Endothelial cell of umbilical vein (primary cell): ENCODE measurements at regions of chr11 and their contacts with region 1.

Region 1: DNA sequence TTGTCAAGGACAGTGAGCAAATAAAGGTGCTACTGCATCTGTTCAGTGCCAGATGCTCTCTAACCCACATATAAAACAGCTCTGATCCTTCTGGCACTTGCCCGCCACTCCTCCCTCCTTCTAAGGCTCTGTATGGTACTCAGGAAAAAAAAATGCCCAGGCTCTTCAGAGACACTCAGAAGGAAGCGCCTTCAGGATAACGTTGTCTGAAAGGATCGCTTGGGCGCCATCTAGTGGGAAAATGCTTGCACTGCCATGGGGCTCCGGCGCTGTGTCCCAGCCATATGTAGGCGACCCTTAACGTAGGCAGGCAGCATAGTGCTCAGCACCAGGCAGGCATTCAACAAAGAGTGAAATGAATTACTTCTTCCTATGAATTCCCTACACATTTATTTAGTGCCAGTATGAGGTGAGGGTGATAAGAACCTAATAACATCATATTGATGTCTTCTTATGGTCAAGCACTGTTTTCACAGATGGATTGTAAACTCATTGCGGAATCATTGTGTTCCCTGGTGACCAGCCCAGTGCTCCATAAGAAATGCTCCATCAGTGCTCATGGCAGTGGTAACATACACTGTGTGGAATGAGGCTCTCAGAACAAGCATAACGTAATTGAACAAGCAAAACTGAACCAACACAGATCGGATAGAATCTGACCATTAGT is 39.6 kb downstream of the PAMR1 start:
- DNase-seq: peak; percentile 79
- H3K4me3 ChIP-seq: no peak overlapping the region
- H3K27ac ChIP-seq: no peak overlapping the region
- H3K4me1 ChIP-seq: no peaks in the 10 kb centered on the region
- H3K27me3 ChIP-seq: peaks cover 8 to 10% of the 10 kb centered on the region in 2 experiments
- CTCF ChIP-seq: peak; percentile 85 to 92
- POLR2A ChIP-seq: no peak

Region 2: GRCh38 chr11:35214792-35215193 is 271.0 kb before region 1 on chr11:
- CTCF ChIA-PET with region 1: no interaction called
- POLR2A ChIA-PET with region 1: no interaction called
- dilution Hi-C with region 1: no loop called
- intact Hi-C with region 1: no loop called
- DNase-seq: peak; percentile 54
- H3K4me3 ChIP-seq: no peak overlapping the region
- H3K27ac ChIP-seq: peak overlapping the region; percentile 24
- H3K4me1 ChIP-seq: peaks cover 9% of the 10 kb centered on the region
- H3K27me3 ChIP-seq: no peaks in the 10 kb centered on the region
- CTCF ChIP-seq: no peak
- POLR2A ChIP-seq: no peak

Region 3: DNA sequence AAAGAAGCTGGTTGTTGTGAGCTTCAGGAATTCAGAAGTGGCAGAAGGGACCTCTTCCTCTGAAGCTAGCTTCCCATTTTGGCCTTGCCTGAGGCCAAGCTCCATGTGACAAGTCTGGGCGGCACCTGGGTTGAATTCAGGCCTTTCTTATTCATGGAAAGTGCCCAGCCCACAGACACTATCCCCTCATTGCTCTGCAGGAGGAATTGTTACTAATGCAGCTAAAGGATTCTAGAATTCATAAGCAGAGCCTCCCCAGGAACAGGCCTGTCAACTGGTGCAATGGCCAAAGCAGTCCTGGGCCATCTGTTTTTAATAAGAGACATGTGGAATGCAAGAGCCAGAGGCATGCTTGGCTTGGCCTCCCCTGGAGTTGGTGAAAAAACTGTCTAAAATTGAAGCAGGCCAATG is 137.9 kb before region 1 on chr11:
- CTCF ChIA-PET with region 1: no interaction called
- POLR2A ChIA-PET with region 1: no interaction called
- dilution Hi-C with region 1: no loop called
- intact Hi-C with region 1: no loop called
- DNase-seq: no peak
- H3K4me3 ChIP-seq: no peak overlapping the region
- H3K27ac ChIP-seq: no peak overlapping the region
- H3K4me1 ChIP-seq: no peaks in the 10 kb centered on the region
- H3K27me3 ChIP-seq: peaks cover 0 to 4% of the 10 kb centered on the region in 2 experiments
- CTCF ChIP-seq: no peak
- POLR2A ChIP-seq: no peak

Region 4: GRCh38 chr11:35474688-35475087 is 11.1 kb before region 1 on chr11:
- CTCF ChIA-PET with region 1: interaction called, 12 read pairs
- POLR2A ChIA-PET with region 1: no interaction called
- dilution Hi-C with region 1: no loop called
- intact Hi-C with region 1: no loop called
- DNase-seq: no peak
- H3K4me3 ChIP-seq: no peak overlapping the region
- H3K27ac ChIP-seq: no peak overlapping the region
- H3K4me1 ChIP-seq: no peaks in the 10 kb centered on the region
- H3K27me3 ChIP-seq: peaks cover 3 to 6% of the 10 kb centered on the region in 2 experiments
- CTCF ChIP-seq: no peak
- POLR2A ChIP-seq: no peak

Region 5: GRCh38 chr11:36149538-36150242 is 663.9 kb after region 1 on chr11:
- CTCF ChIA-PET with region 1: no interaction called
- POLR2A ChIA-PET with region 1: no interaction called
- dilution Hi-C with region 1: no loop called
- intact Hi-C with region 1: loop called (anchors 5 kb)
- DNase-seq: peak; percentile 99
- H3K4me3 ChIP-seq: no peak overlapping the region
- H3K27ac ChIP-seq: peak overlapping the region; percentile 93
- H3K4me1 ChIP-seq: peaks cover 25% of the 10 kb centered on the region
- H3K27me3 ChIP-seq: no peaks in the 10 kb centered on the region
- CTCF ChIP-seq: peak; percentile 43 to 50
- POLR2A ChIP-seq: peak; percentile 64